ENCODE measurements at regions of chr17 and their contacts with region 1.

Region 1: DNA sequence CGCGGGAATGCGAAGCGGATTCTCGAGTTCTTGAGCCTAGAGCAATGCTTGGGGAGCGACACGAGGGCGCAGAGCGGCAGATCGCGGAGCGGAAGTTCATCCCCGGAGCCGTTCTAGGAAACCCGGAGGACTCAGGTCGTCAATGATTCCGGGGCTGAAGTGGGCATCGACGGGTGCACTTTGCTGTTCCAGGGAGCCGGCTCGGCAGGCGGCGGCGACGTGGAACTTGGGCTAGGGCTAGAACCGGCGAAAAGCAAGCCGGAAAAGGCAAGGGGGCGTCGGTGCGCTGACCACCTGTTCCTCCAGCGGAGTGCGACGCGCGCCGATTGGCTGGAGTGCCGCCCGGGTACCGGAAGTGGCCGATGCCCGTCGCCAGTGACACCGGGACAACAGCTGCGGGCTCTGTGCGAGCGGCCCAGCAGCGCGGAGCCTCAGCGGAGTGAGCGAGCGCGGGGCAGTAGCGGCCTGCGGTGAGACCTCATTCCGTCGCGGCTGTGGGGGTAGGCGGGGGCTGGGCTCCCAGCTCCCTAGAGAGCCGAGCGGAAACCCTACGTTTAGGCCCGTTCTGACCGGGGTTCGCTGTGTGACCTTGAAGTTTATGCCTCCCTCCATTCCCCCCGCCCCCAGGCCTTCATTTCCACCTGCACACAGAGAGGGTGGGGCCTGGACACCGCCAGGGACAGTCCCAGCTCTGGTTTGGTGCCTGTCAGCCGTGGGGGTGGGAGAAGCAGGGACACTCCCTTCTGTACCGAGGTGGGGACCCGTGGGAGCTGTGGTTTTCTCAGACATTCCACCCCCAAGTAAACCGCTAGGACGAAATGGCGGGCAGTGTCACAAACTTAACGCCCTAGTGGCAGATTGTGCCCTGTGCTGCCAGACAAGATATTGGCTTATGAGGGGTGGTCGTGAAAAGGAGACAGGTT is at the start of gene ZFP3:
- H3K4me3 Mint-ChIP-seq: peak within 1 kb of the TSS; percentile 96
- H3K27ac Mint-ChIP-seq: peak within 1 kb of the TSS; percentile 96
- H3K4me1 Mint-ChIP-seq: peaks cover 24% of the 10 kb centered on the region
- H3K27me3 Mint-ChIP-seq: peaks cover 17% of the 10 kb centered on the region

Region 2: GRCh38 chr17:4540224-4540641 is 538.1 kb before region 1 on chr17:
- intact Hi-C with region 1: no loop called
- H3K4me3 Mint-ChIP-seq: no peak overlapping the region
- H3K27ac Mint-ChIP-seq: no peak overlapping the region
- H3K4me1 Mint-ChIP-seq: peaks cover 17% of the 10 kb centered on the region
- H3K27me3 Mint-ChIP-seq: peaks cover 7% of the 10 kb centered on the region

Region 3: DNA sequence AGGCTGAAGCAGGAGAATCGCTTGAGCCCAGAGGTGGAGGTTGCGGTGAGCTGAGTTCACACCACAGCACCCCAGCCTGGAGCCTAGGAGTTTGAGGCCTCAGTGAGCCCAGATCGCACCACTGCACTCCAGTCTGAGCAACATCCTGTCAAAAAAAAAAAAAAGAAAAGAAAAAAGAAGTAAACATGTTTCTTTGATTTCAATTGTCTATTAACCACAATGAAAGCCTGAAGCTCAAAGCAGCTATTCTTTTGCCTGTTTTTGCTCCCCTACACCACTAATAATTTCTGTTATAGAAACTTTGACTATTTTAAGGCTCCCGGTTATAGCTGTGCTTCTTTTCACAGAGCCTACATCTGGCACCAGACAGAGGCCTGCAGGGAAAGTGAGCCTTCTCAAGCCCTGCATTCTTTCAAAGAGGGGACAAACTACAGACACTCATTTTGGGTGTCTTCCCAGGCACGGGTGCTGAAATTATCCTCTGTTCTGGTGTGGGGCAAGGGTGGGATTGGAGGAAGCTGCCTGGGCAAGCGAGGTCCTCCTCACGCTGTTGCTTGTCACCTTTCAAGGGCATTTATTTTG is 29.0 kb before region 1 on chr17:
- intact Hi-C with region 1: no loop called
- H3K4me3 Mint-ChIP-seq: no peak overlapping the region
- H3K27ac Mint-ChIP-seq: no peak overlapping the region
- H3K4me1 Mint-ChIP-seq: no peaks in the 10 kb centered on the region
- H3K27me3 Mint-ChIP-seq: peaks cover 30% of the 10 kb centered on the region

Region 4: GRCh38 chr17:5111402-5112204 is 33.2 kb after region 1 on chr17 and contains the start of gene ZNF232:
- intact Hi-C with region 1: loop called (anchors 5 kb)
- H3K4me3 Mint-ChIP-seq: peak within 1 kb of the TSS; percentile 90
- H3K27ac Mint-ChIP-seq: peak within 1 kb of the TSS; percentile 94
- H3K4me1 Mint-ChIP-seq: peaks cover 38% of the 10 kb centered on the region
- H3K27me3 Mint-ChIP-seq: peaks cover 24% of the 10 kb centered on the region

Region 5: GRCh38 chr17:5155495-5155894 is 77.1 kb after region 1 on chr17:
- intact Hi-C with region 1: no loop called
- H3K4me3 Mint-ChIP-seq: no peak overlapping the region
- H3K27ac Mint-ChIP-seq: no peak overlapping the region
- H3K4me1 Mint-ChIP-seq: no peaks in the 10 kb centered on the region
- H3K27me3 Mint-ChIP-seq: peaks cover 21% of the 10 kb centered on the region

Region 6: DNA sequence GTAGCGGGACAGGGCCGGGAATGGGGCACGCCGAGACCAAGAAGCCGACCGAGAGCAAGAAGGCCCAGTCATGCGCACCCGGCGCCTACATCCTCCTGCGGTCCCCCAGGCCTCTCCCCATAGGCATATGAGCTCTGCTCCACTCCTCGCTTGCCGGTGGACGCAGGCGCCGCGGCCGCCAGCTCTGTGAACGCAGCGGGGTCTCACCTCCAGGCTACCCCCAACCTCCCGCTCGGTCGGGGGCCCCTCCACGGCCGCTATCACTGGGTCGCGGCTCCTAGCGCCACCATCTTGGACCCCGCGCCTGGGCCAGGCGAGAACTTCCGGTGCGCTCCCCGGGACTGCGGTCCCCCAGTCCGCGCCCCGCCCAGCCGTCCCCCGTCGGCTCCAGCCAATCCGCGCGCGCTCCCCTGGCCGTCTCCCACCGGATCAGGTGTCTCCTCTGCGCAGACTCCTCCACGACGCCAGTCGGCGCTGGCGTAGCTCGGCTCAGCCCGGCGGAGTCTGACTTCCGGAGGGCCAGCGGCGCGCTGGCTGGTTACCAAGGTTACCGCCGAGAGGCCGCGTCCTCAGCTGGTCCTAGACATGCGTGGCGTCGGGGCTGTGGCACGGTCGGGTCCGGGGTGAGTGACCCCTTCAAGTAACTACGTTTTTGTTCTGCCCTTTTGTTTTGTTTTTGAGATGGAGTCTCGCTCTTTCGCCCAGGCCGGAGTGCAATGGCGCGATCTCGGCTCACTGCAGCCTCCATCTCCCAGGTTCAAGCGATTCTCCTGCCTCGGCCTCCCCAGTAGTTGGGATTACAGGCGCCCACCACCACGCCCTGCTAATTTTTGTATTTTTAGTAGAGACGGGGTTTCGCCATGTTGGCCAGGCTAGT is 113.4 kb after region 1 on chr17 and contains the start of gene ZNF594:
- intact Hi-C with region 1: loop called (anchors 5 kb)
- H3K4me3 Mint-ChIP-seq: peak within 1 kb of the TSS; percentile 93
- H3K27ac Mint-ChIP-seq: peak within 1 kb of the TSS; percentile 91
- H3K4me1 Mint-ChIP-seq: peaks cover 20% of the 10 kb centered on the region
- H3K27me3 Mint-ChIP-seq: no peaks in the 10 kb centered on the region